ENCODE measurements at regions of chr7 and their contacts with region 1.

Region 1: GRCh38 chr7:604001-604883 is 84.6 kb upstream of the PDGFA start:
- DNase-seq: peak; percentile 93
- H3K4me3 ChIP-seq: peak overlapping the region; percentile 16
- H3K27ac ChIP-seq: peak overlapping the region; percentile 80
- H3K4me1 ChIP-seq: peaks cover 32% of the 10 kb centered on the region
- H3K27me3 ChIP-seq: no peaks in the 10 kb centered on the region
- CTCF ChIP-seq: no peak

Region 2: GRCh38 chr7:657565-658119 is 53.4 kb after region 1 on chr7:
- CTCF ChIA-PET with region 1: no interaction called
- POLR2A ChIA-PET with region 1: no interaction called
- intact Hi-C with region 1: no loop called
- DNase-seq: peak; percentile 26
- H3K4me3 ChIP-seq: no peak overlapping the region
- H3K27ac ChIP-seq: no peak overlapping the region
- H3K4me1 ChIP-seq: no peaks in the 10 kb centered on the region
- H3K27me3 ChIP-seq: no peaks in the 10 kb centered on the region
- CTCF ChIP-seq: no peak

Region 3: GRCh38 chr7:774161-775109 is 170.2 kb after region 1 on chr7:
- CTCF ChIA-PET with region 1: no interaction called
- POLR2A ChIA-PET with region 1: no interaction called
- intact Hi-C with region 1: loop called (anchors 10 kb)
- DNase-seq: peak; percentile 69
- H3K4me3 ChIP-seq: no peak overlapping the region
- H3K27ac ChIP-seq: no peak overlapping the region
- H3K4me1 ChIP-seq: peaks cover 51% of the 10 kb centered on the region
- H3K27me3 ChIP-seq: no peaks in the 10 kb centered on the region
- CTCF ChIP-seq: peak; percentile 93